Activated B cell treated with CpG ODN at 0.5 μM for 24 hours (primary cell): ENCODE measurements at regions of chr3 and their contacts with region 1.

Region 1: DNA sequence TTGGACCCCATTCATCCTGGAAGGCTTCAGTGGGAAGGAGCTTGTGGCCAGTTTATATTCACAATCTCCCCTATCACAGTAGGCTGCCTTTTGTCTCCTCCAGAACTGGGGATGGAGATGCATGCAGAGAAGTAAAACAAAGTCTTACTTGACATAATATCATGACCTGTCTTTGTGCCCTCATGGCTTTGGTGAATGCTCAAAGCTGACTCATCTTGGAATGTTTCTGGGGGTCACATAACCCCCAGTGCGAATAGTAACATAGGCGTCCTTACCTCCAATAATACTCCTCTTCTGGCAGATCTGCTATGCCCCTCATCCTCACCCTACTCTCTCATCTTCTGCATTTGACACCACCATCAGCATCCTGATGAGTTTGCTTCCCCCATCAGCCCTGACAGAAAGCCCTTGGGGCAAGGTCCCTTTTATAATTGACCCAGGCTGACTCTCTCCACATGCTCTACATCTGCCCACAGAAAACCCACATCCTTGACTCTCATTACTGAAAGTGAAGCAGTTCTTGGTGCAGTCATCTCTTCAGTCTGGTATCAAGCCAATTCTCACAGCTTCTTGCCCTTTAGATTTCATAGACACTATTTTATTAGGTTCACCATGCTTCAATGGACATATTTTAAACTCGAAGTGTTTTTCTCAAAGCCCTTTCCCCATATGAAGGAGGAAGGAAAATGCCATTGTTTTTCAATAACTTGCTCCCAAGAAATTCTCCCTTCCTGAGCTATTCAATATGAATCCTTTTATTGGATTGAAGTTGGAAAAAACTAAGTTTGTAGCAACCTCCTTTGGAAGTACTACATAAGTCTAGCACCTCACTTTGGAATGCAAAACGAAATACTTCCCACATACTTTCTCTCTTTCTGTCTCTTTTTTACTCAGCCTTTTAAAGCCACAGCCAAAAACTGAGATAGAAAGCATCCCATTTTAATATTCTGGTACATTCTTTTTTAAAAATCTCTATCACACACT is 36.6 kb downstream of the OSTN start:
- DNase-seq: no peak
- ATAC-seq: peak; percentile 88
- H3K4me3 Mint-ChIP-seq: no peak overlapping the region
- H3K27ac Mint-ChIP-seq: no peak overlapping the region
- H3K4me1 Mint-ChIP-seq: peaks cover 41% of the 10 kb centered on the region
- H3K27me3 Mint-ChIP-seq: no peaks in the 10 kb centered on the region
- CTCF ChIP-seq: no peak

Region 2: GRCh38 chr3:191136347-191136746 is 99.3 kb before region 1 on chr3:
- CTCF ChIA-PET with region 1: no interaction called
- POLR2A ChIA-PET with region 1: no interaction called
- intact Hi-C with region 1: loop called (anchors 5 kb)
- DNase-seq: no peak
- ATAC-seq: no peak
- H3K4me3 Mint-ChIP-seq: no peak overlapping the region
- H3K27ac Mint-ChIP-seq: no peak overlapping the region
- H3K4me1 Mint-ChIP-seq: peaks cover 38% of the 10 kb centered on the region
- H3K27me3 Mint-ChIP-seq: no peaks in the 10 kb centered on the region
- CTCF ChIP-seq: no peak

Region 3: DNA sequence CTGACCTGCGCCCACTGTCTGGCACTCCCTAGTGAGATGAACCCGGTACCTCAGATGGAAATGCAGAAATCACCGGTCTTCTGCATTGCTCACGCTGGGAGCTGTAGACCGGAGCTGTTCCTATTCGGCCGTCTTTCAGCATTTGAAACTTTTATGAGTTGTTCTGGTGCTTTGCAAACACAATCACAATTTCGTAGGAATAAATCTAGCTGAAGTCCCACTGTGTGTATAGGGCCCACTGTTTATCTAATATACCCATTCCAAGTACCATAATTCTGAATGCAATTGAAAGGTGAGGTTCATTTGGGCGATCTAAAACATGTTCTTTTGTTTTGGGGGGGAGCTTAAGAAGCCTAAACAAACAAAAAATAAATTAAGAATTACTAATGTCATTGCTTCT is 919.6 kb after region 1 on chr3:
- CTCF ChIA-PET with region 1: no interaction called
- POLR2A ChIA-PET with region 1: no interaction called
- intact Hi-C with region 1: no loop called
- DNase-seq: no peak
- ATAC-seq: no peak
- H3K4me3 Mint-ChIP-seq: peak overlapping the region; percentile 59
- H3K27ac Mint-ChIP-seq: peak overlapping the region; percentile 6
- H3K4me1 Mint-ChIP-seq: peaks cover 3% of the 10 kb centered on the region
- H3K27me3 Mint-ChIP-seq: peaks cover 3% of the 10 kb centered on the region
- CTCF ChIP-seq: no peak